ENCODE measurements at regions of chr10 and their contacts with region 1.

Region 1: GRCh38 chr10:54530299-54530698 is 270.7 kb downstream of the PCDH15 start:
- DNase-seq: no peak
- ATAC-seq: no peak
- H3K4me3 ChIP-seq: no peak overlapping the region
- H3K27ac ChIP-seq: no peak overlapping the region
- H3K4me1 ChIP-seq: no peaks in the 10 kb centered on the region
- H3K27me3 ChIP-seq: no peaks in the 10 kb centered on the region
- CTCF ChIP-seq: no peak

Region 2: DNA sequence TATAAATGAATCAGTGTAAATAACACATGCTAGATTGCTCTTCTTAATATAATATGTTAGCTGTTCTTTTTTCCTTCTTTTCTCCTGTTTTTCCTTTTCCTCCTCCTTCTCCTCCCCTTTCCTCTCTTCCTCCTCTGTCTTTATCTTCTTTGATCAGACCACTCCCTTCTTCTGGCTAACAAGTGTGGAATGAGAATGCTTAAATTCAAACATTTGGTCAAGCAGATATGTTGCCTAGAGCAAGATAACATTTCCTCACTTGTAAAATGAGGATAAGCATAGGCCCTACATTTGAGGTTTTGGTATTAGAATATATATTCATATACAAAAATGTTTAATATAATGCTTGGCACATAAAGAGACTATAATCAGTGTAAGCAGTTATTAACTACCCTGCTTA is 28.4 kb before region 1 on chr10:
- CTCF ChIA-PET with region 1: no interaction called
- POLR2A ChIA-PET with region 1: interaction called, 11 read pairs
- in situ Hi-C with region 1: no loop called
- intact Hi-C with region 1: no loop called
- DNase-seq: no peak
- ATAC-seq: no peak
- H3K4me3 ChIP-seq: no peak overlapping the region
- H3K27ac ChIP-seq: no peak overlapping the region
- H3K4me1 ChIP-seq: no peaks in the 10 kb centered on the region
- H3K27me3 ChIP-seq: no peaks in the 10 kb centered on the region
- CTCF ChIP-seq: no peak

Measured in Panc1 (cell line).